ENCODE measurements at regions of chr1 and their contacts with region 1.

Region 1: GRCh38 chr1:214328770-214329469 is 48.0 kb downstream of the SMYD2 start:
- DNase-seq: no peak
- H3K4me3 ChIP-seq: no peak overlapping the region
- H3K27ac ChIP-seq: peak overlapping the region in 2 of 4 donors; percentile 19 to 68
- H3K4me1 ChIP-seq: peaks cover 12 to 45% (median 25%) of the 10 kb centered on the region in 3 donors
- H3K27me3 ChIP-seq: no peaks in the 10 kb centered on the region
- CTCF ChIP-seq: peak; percentile 67 to 93 (median 88)
- POLR2A ChIP-seq: no peak

Region 2: GRCh38 chr1:214251354-214251753 is 77.6 kb before region 1 on chr1:
- intact Hi-C with region 1: no loop called
- DNase-seq: no peak
- H3K4me3 ChIP-seq: no peak overlapping the region
- H3K27ac ChIP-seq: no peak overlapping the region
- H3K4me1 ChIP-seq: no peaks in the 10 kb centered on the region
- H3K27me3 ChIP-seq: peaks cover 0 to 7% (median 0%) of the 10 kb centered on the region in 4 donors
- CTCF ChIP-seq: no peak
- POLR2A ChIP-seq: no peak

Region 3: DNA sequence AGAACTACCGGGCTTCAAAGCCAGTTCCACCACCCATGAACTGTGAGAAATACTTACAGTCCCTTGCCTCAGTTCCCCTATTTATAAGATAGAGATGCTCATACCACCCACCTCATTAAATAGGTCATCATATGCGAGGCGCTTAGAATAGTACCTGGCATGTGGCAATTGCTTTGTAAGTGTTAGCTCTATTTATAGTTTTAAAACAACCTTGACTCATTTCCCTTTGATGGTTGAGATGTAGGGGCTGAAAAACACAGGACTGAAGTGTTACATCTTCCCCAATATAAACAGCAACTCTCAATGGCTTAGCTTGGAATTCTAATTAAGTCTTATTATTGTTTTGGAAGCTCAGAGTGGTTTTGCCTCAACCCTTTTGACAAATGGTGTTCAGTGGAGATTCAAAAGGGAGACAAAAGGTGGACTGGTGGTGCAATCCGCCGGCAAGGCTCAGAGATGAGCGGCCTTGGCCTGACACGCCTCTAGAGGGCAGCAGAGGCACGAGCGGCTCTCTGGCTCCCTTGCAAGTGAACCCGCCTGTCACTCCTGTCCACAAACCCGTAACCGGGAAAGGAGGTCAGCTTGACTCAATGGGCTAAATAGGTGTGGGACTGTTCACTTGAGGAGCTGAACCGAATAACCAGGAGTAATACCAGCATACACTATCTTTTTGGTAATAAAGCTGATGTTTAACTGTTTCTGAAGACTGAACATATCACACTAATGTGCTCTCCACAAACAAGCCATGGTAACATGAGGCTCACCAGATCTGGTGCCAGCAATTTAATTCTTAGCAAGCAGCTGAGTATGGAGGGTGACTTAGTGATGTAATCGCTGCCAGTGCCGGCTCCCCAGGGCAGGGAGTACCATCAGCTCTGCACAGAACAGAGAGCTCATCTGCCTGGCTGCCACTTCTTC is 67.5 kb before region 1 on chr1:
- intact Hi-C with region 1: loop called (anchors 5 kb)
- DNase-seq: no peak
- H3K4me3 ChIP-seq: peak overlapping the region in 1 of 4 donors; percentile 24
- H3K27ac ChIP-seq: no peak overlapping the region
- H3K4me1 ChIP-seq: peaks cover 0 to 8% (median 4%) of the 10 kb centered on the region in 3 donors
- H3K27me3 ChIP-seq: peaks cover 0 to 60% (median 0%) of the 10 kb centered on the region in 4 donors
- CTCF ChIP-seq: peak; percentile 78 to 93 (median 92)
- POLR2A ChIP-seq: no peak

Region 4: GRCh38 chr1:214584805-214585766 is 256.2 kb after region 1 on chr1:
- intact Hi-C with region 1: loop called (anchors 5 kb)
- DNase-seq: no peak
- H3K4me3 ChIP-seq: no peak overlapping the region
- H3K27ac ChIP-seq: no peak overlapping the region
- H3K4me1 ChIP-seq: peaks cover 0 to 31% (median 6%) of the 10 kb centered on the region in 3 donors
- H3K27me3 ChIP-seq: no peaks in the 10 kb centered on the region
- CTCF ChIP-seq: peak in 5 of 6 experiments; percentile 66 to 88 (median 75)
- POLR2A ChIP-seq: no peak

Measured in esophagus squamous epithelium (tissue), 5 donors.